Sciatic nerve (tissue), 2 donors: ENCODE measurements at regions of chr3 and their contacts with region 1.

Region 1: DNA sequence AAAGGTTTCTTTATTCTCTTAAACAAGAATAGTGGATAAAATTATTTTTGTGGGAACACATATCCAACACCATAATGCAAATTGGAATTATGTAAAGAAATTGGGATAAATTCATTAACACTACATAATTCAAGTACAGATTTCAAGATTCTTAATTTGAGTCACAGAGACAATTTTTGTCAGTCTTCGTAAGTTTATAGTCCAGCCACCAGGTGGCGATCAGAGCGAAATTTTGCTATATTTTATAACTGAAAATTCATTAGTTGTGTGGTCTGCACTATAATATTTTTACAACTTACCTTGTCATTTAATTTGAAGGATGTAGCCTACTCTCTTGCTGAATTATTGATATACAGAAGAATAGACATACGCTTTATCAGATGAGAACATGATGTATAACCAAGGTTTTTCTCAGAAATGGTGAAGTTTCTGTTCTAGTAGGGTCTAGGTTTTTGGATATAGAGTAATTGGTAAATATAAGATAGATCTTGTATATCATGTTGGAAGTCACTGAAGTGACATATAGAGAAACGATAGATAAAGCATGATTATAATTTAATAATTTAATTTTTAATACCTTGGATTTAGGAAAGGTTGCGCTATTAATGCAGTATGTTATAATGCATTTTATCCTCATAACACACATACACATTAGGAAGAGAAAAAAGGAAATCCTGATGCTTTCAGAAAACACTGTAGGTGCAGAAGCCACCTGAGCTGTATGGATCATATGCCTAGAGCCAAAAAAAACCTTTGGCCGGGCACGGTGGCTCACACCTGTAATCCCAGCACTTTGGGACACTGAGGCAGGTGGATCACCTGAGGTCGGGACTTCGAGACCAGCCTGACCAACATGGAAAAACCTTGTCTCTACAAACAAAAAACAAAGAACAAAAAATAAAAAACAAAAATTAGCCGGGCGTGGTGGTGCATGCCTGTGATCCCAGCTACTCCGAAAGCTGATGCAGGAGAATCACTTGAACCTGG is 31.7 kb downstream of the PLSCR4 start:
- DNase-seq: peak; percentile 75
- ATAC-seq: no peak

Region 2: DNA sequence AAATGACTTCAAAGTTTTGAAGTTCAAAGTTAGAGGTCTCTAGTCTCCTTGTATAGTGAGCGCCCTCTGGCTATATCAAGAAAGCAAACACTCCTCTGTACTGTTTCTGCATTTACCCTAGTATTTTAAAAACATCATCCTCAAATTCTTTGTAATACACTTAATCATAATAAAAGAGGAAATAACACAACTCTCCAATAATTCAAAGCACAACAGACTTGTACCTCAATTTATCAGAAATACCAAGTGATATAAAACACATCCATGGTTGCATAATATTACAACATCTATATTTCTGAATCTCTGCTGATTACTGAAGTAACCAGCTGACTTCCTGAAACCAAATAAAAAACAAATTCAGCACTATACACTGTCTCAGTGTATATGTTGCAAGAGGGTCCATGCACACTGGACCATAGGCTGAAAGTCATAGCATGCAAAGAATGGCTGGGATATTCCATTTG is 70.7 kb before region 1 on chr3:
- intact Hi-C with region 1: no loop called
- DNase-seq: no peak
- ATAC-seq: peak; percentile 37

Region 3: GRCh38 chr3:146326670-146327543 is 107.7 kb after region 1 on chr3:
- intact Hi-C with region 1: loop called (anchors 5 kb)
- DNase-seq: peak; percentile 66
- ATAC-seq: peak; percentile 92